Gastrocnemius medialis (tissue), 4 donors: ENCODE measurements at regions of chr1 and their contacts with region 1.

Region 1: GRCh38 chr1:150979092-150980056 is 2.7 kb upstream of the ANXA9 start:
- DNase-seq: peak; percentile 65 to 84
- ATAC-seq: peak; percentile 45 to 55
- H3K4me3 ChIP-seq: peak overlapping the region in 1 of 4 donors; percentile 19
- H3K27ac ChIP-seq: peak overlapping the region; percentile 40 to 86 (median 47)
- H3K4me1 ChIP-seq: peaks cover 18 to 20% of the 10 kb centered on the region in 2 donors
- H3K27me3 ChIP-seq: no peaks in the 10 kb centered on the region
- CTCF ChIP-seq: peak; percentile 96 to 99 (median 98)
- POLR2A ChIP-seq: no peak

Region 2: DNA sequence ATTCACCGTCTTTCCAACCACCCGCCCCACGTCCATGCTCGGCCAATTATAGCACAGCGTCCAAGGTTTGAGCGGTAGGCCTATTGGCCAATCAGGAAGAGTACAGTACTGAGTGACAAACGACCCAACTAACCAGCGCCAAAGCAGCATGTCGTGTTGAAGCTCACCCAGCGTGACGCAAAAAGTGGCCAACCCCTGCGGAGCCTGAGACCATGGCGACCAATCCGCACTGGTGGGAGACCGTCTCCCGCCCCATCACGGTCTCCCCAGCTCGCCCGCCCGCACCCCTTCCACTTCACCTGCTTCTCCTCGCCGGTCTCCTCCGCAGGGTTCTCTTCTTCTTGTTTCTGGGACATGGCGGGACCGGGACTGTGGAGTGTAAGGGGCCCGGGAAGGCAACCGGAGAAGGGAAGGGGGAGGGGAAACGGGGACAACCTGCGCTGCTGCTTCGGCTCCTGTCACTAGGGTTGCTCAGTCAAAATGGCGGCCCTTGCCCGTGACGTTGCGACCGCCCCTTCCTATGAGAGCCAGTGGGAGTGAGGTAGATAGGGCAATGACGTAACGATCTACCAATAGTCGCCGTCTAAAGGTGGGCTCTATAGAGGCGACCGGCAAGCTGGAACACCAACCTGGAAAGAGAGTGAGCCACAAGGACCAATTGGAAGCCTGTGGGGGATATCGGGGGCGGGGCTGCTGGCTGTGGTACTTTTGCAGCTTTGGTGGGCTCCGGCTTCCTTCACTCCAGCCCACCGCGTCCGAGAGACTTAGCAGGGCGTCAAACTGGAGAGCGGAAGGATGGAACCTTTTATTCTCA is 350.1 kb before region 1 on chr1 and contains the start of gene ENSA:
- in situ Hi-C with region 1: no loop called
- intact Hi-C with region 1: loop called (anchors 5 kb)
- DNase-seq: peak; percentile 99
- ATAC-seq: peak; percentile 94 to 97
- H3K4me3 ChIP-seq: peak within 1 kb of the TSS; percentile 77 to 92 (median 80)
- H3K27ac ChIP-seq: peak within 1 kb of the TSS; percentile 95 to 99 (median 97)
- H3K4me1 ChIP-seq: peaks cover 17 to 25% of the 10 kb centered on the region in 2 donors
- H3K27me3 ChIP-seq: no peaks in the 10 kb centered on the region
- CTCF ChIP-seq: no peak
- POLR2A ChIP-seq: peak; percentile 95 to 96
- total RNA-seq, gene ENSA: 164 to 302 (median 219) TPM

Region 3: DNA sequence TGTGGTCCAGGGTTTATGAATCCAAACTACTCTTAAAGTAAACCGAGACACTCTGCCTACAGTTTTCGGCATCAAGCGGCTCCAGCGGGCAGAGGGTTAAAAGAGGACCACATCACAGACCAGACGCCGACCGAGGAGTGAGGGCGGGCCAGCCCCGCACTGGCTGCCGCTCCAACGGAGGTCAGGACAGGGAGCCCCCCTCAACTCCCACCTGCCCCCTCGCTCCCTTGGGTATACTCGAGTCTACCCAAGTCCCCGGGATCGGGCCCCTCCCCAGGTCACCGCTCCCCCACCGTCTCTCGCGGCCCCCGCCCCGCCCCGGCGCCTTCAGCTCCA is 103.3 kb before region 1 on chr1:
- in situ Hi-C with region 1: no loop called
- intact Hi-C with region 1: loop called (anchors 2 kb)
- DNase-seq: peak in 1 of 2 donors; percentile 59
- ATAC-seq: peak; percentile 35 to 53
- H3K4me3 ChIP-seq: peak overlapping the region; percentile 95 to 100 (median 99)
- H3K27ac ChIP-seq: peak overlapping the region; percentile 99 to 100 (median 100)
- H3K4me1 ChIP-seq: peaks cover 15 to 19% of the 10 kb centered on the region in 2 donors
- H3K27me3 ChIP-seq: no peaks in the 10 kb centered on the region
- CTCF ChIP-seq: no peak
- POLR2A ChIP-seq: no peak

Region 4: GRCh38 chr1:150961799-150962198 is 17.6 kb before region 1 on chr1:
- in situ Hi-C with region 1: no loop called
- intact Hi-C with region 1: no loop called
- DNase-seq: no peak
- ATAC-seq: no peak
- H3K4me3 ChIP-seq: no peak overlapping the region
- H3K27ac ChIP-seq: no peak overlapping the region
- H3K4me1 ChIP-seq: no peaks in the 10 kb centered on the region
- H3K27me3 ChIP-seq: no peaks in the 10 kb centered on the region
- CTCF ChIP-seq: no peak
- POLR2A ChIP-seq: no peak

Region 5: DNA sequence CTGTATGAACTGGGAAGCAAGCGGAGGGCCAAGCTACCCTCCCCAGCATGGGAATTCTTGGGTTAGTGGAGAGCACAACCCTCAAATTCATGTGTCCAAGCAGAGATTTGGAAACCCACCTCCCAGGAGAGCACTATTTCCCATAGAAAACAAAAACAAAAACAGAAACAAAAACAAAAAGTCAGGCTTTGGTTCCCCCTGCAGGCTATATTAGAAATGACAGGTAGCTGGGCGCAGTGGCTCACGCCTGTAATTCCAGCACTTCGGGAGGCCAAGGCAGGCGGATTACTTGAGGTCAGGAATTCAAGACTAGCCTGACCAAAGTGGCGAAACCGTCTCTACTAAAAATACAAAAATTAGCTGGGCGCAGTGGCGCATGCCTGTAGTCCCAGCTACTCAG is 16.5 kb after region 1 on chr1:
- in situ Hi-C with region 1: no loop called
- intact Hi-C with region 1: loop called (anchors 1 kb)
- DNase-seq: peak in 1 of 2 donors; percentile 78
- ATAC-seq: peak; percentile 76 to 86
- H3K4me3 ChIP-seq: peak overlapping the region in 2 of 4 donors; percentile 27 to 29
- H3K27ac ChIP-seq: peak overlapping the region; percentile 51 to 70 (median 64)
- H3K4me1 ChIP-seq: peaks cover 9 to 11% of the 10 kb centered on the region in 2 donors
- H3K27me3 ChIP-seq: no peaks in the 10 kb centered on the region
- CTCF ChIP-seq: peak; percentile 78 to 87 (median 83)
- POLR2A ChIP-seq: no peak

Region 6: DNA sequence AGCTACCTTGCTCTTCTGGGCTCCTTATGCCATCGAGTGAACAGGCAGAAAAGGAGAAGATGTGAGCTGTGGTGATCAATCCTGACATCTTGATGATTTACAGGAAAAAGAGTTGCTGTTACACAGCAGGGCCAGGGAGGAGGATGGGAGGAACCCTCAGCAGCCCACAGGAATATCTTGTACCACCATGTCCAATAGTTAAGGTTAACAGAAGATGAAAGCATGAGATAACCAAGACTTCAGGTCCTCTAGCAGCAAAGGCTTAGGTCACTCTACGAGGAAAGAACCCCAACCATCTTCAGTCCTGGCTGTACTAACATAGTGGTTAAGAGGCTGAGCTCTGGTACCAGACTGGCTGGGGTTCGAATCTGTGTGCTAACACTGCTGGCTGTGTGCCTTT is 405.2 kb after region 1 on chr1:
- in situ Hi-C with region 1: no loop called
- intact Hi-C with region 1: no loop called
- DNase-seq: no peak
- ATAC-seq: no peak
- H3K4me3 ChIP-seq: no peak overlapping the region
- H3K27ac ChIP-seq: no peak overlapping the region
- H3K4me1 ChIP-seq: no peaks in the 10 kb centered on the region
- H3K27me3 ChIP-seq: no peaks in the 10 kb centered on the region
- CTCF ChIP-seq: no peak
- POLR2A ChIP-seq: no peak

Region 7: DNA sequence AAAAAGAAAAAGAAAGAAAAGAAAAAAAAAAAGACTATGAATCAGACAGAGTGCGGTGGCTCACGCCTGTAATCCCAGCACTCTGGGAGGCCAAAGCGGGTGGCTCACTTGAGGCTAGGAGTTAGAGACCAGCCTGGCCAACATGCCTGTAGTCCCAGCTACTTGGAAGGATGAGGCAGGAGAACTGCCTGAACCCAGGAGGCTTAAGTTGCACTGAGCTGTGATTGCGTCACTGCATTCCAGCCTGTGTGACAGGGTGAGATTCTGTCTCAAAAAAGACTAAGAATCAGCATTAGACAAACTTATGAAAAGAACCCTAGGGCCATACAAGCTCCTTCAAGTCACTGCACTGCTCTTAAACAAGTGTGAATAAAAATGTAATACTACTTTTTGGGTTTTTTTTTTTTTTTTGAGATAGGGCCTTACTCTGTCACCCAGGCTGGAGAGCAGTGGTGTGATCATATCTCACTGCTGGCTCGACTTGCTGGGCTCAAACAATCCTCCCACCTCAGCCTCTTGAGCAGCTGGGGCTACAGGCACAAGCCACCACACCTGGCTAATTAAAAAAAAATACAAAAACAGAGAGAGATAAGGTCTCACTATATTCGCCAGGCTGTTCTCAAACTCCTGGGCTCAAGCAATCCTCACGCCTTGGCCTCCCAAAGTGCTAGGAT is 437.0 kb after region 1 on chr1:
- in situ Hi-C with region 1: no loop called
- intact Hi-C with region 1: no loop called
- DNase-seq: no peak
- ATAC-seq: no peak
- H3K4me3 ChIP-seq: no peak overlapping the region
- H3K27ac ChIP-seq: no peak overlapping the region
- H3K4me1 ChIP-seq: no peaks in the 10 kb centered on the region
- H3K27me3 ChIP-seq: no peaks in the 10 kb centered on the region
- CTCF ChIP-seq: no peak
- POLR2A ChIP-seq: no peak